ENCODE measurements at regions of chr19 and their contacts with region 1.

Region 1: GRCh38 chr19:48255376-48256303 is at the start of gene CARD8:
- DNase-seq: peak; percentile 77
- ATAC-seq: peak; percentile 82
- H3K4me3 ChIP-seq: peak within 1 kb of the TSS; percentile 78
- H3K27ac ChIP-seq: peak within 1 kb of the TSS; percentile 91
- H3K4me1 ChIP-seq: peaks cover 6% of the 10 kb centered on the region; the same call in 1 of the 2 replicates
- H3K27me3 ChIP-seq: no peaks in the 10 kb centered on the region
- CTCF ChIP-seq: no peak
- total RNA-seq, gene CARD8: 6.8 and 8.7 TPM in 2 replicates

Region 2: DNA sequence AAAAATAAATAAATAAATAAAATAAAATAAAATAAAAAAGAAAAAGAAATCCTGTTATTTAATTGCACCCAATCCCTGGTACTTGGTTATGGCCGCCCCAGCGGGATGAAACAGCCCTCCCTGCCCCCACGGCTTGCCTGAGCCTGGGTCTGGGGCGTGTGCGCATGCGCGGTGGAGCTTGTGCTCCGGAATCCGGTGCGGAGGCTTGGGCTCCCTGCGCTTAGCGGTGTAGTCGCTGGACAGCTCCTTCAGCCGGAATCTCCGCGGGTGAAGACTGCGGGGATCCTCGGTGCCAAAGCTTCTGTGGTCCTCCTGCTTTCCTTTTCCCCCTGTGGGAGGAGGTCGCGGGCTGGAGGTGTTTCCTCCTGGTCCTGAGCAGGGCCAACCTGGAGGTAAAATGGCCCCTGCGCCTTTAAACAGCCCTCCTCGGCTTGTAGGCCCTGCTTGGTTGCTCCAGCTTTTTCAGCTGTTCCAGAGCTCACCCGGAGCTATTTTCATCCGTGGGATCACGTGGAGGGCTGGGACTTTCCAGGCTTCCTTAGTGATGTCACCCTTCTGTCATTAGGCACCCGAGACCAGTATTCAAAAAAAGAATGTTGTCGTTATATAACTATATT is 145.2 kb before region 1 on chr19 and contains the start of gene PLA2G4C:
- CTCF ChIA-PET with region 1: interaction called, 3 read pairs
- POLR2A ChIA-PET with region 1: no interaction called
- intact Hi-C with region 1: loop called (anchors 1 kb)
- DNase-seq: peak; percentile 85
- ATAC-seq: peak; percentile 68
- H3K4me3 ChIP-seq: peak within 1 kb of the TSS; percentile 66
- H3K27ac ChIP-seq: peak within 1 kb of the TSS; percentile 70
- H3K4me1 ChIP-seq: 0 out of 2 replicates have a peak, but pooled peaks cover 4% of the 10 kb centered on the region
- H3K27me3 ChIP-seq: no peaks in the 10 kb centered on the region
- CTCF ChIP-seq: no peak
- total RNA-seq, gene PLA2G4C: 0.63 and 2.6 TPM in 2 replicates

Region 3: DNA sequence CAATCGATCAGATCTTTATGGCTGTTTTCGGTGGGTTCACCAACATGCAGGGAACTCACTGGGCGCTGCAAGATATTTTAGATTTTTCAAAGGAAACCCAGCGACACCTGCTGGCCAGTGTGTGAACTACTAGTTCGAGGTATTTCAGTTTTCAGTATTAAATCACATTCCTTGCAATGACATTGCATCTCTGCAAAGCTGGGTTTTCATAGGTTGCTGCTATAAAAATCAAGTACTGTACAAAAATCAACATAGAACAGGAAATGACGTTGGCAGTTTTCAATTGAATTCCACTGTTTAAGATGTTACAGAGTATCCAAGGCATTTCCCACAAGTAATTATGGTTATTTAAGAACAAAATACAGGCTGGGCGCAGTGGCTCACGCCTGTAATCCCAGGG is 103.1 kb before region 1 on chr19:
- CTCF ChIA-PET with region 1: no interaction called
- POLR2A ChIA-PET with region 1: no interaction called
- intact Hi-C with region 1: loop called (anchors 2 kb)
- DNase-seq: peak; percentile 67
- ATAC-seq: peak; percentile 41
- H3K4me3 ChIP-seq: no peak overlapping the region
- H3K27ac ChIP-seq: no peak overlapping the region
- H3K4me1 ChIP-seq: no peaks in the 10 kb centered on the region
- H3K27me3 ChIP-seq: no peaks in the 10 kb centered on the region
- CTCF ChIP-seq: peak; percentile 80

Region 4: GRCh38 chr19:48190288-48190884 is 65.3 kb before region 1 on chr19:
- CTCF ChIA-PET with region 1: no interaction called
- POLR2A ChIA-PET with region 1: interaction called, 3 read pairs
- intact Hi-C with region 1: loop called (anchors 1 kb)
- DNase-seq: peak; percentile 97
- ATAC-seq: peak; percentile 97
- H3K4me3 ChIP-seq: no peak overlapping the region
- H3K27ac ChIP-seq: peak overlapping the region; percentile 34; the same call in 1 of the 2 replicates
- H3K4me1 ChIP-seq: peaks cover 11% of the 10 kb centered on the region
- H3K27me3 ChIP-seq: no peaks in the 10 kb centered on the region
- CTCF ChIP-seq: peak; percentile 62

Region 5: DNA sequence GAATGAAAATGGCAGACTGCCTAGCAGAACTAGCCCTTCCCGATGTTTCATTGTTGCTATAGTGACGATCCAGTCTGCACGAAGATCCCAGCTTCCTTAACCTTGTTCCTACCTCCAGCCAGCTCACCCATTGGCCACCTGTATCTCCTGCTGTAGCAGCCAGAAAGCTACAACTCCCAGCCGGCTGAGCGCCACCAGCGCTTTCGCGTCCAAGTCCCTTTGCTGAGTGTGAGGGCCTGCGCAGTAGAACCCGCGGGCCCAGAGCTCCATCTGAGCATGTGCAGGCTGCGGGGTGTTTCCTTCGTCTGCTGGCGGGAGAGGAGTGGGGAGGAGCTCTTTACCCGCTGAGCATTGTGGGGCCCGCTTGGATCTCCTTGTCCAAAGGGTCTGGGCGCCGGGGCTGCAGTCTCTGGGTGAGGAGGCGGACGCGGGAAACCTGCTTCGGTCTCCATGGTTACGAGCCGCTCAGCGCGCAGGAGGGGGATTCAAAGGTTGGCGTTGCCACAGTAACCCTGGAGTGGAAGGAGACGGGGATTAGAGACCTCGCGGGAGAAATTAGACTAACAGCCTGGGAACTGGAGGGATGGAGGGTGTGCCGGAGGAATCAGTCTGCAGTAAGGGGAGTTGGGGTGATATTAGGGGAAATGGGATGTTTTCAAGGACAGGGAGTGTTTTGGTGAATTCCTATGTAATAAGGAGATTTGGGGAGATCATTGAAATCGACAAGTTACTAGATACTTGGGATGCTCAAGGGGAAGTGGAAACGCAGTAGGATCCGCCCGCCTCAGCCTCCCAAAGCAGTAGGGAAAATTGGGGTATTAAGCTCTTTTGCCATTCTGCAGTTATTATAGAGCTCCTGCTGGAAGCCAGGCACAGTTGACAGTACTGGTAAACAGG is 51.7 kb before region 1 on chr19:
- CTCF ChIA-PET with region 1: interaction called, 3 read pairs
- POLR2A ChIA-PET with region 1: no interaction called
- intact Hi-C with region 1: loop called (anchors 5 kb)
- DNase-seq: peak; percentile 93
- ATAC-seq: peak; percentile 98
- H3K4me3 ChIP-seq: peak overlapping the region; percentile 81
- H3K27ac ChIP-seq: peak overlapping the region; percentile 49
- H3K4me1 ChIP-seq: peaks cover 9% of the 10 kb centered on the region
- H3K27me3 ChIP-seq: no peaks in the 10 kb centered on the region
- CTCF ChIP-seq: no peak